HCT116 (cell line): ENCODE measurements at regions of chr6 and their contacts with region 1.

Region 1: GRCh38 chr6:164792666-164793065 is 516.7 kb downstream of the C6orf118 start:
- DNase-seq: no peak
- ATAC-seq: no peak
- H3K4me3 ChIP-seq: no peak overlapping the region
- H3K27ac ChIP-seq: no peak overlapping the region
- H3K4me1 ChIP-seq: no peaks in the 10 kb centered on the region
- H3K27me3 ChIP-seq: no peaks in the 10 kb centered on the region
- CTCF ChIP-seq: no peak
- POLR2A ChIP-seq: no peak
- RAD21 ChIP-seq: no peak

Region 2: DNA sequence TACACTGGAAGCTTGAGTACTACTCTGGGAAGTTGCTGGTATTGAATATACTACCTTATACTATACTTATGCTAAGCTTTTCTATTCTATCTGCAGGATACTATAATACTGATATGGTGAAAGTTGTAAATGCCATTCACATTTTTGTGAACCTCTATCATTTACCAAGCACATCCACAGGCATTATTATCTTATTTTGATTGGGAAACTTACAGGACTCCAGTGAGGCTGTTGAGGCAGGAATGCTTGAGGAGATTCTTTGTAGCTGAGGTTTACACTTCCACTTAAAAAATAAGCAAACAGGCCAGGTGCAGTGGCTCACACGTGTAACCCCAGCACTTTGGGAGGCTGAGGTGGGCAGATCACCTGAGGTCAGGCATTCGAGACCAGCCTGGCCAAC is 935.2 kb before region 1 on chr6:
- CTCF ChIA-PET with region 1: no interaction called
- POLR2A ChIA-PET with region 1: no interaction called
- RAD21 ChIA-PET with region 1: no interaction called
- intact Hi-C with region 1: loop called (anchors 5 kb)
- DNase-seq: no peak
- ATAC-seq: no peak
- H3K4me3 ChIP-seq: no peak overlapping the region
- H3K27ac ChIP-seq: no peak overlapping the region
- H3K4me1 ChIP-seq: no peaks in the 10 kb centered on the region
- H3K27me3 ChIP-seq: no peaks in the 10 kb centered on the region
- CTCF ChIP-seq: no peak
- POLR2A ChIP-seq: no peak
- RAD21 ChIP-seq: no peak